ENCODE measurements at regions of chr5 and their contacts with region 1.

Region 1: DNA sequence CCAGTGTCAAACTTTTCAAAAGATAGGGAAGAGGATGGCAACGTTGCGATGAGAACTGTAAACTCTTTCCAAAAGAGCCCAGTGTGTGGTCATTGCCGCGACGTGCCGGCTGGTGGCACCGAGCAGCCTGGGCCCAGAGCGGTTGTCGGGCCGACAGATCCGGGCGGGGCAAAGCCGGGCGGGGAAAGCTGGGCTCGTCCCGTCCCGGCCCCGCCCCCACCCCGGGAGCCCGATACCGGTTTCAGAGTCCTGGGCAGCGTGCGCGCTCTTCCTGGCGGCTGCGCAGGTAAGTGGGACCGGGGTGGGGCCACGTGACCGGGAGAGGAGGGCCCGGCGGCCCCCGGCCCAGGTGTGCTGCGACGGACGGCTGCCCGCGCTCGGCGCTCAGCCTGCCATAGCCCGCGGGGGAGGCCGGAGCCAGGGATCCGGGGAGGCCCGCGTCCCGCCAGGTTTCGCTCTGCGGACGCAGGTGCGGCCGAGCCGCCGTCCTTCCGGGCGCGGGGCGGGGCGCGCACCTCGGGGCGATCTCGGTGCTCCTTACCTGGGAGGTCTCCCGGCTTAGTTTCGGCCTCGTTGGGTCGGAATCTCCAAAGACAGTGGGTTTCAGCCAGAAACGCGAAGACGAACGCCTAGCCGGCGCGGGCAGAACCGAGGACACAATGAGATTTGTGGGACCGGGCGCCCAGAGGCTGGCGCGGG is at the start of gene MARVELD2:
- DNase-seq: peak; percentile 96 to 98 (median 96)
- ATAC-seq: peak; percentile 93 to 97 (median 96)
- H3K4me3 ChIP-seq: peak within 1 kb of the TSS; percentile 38 to 66 (median 60)
- H3K27ac ChIP-seq: peak within 1 kb of the TSS; percentile 82 to 91 (median 88)
- H3K4me1 ChIP-seq: peaks cover 0 to 11% (median 4%) of the 10 kb centered on the region in 3 donors
- H3K27me3 ChIP-seq: no peaks in the 10 kb centered on the region
- CTCF ChIP-seq: peak; percentile 25 to 48 (median 34)
- total RNA-seq, gene MARVELD2: 15.5 to 34.7 (median 21.0) TPM

Region 2: GRCh38 chr5:68898951-68899471 is 516.0 kb before region 1 on chr5:
- intact Hi-C with region 1: no loop called
- DNase-seq: no peak
- ATAC-seq: peak in 2 of 4 donors; percentile 51 to 72
- H3K4me3 ChIP-seq: no peak overlapping the region
- H3K27ac ChIP-seq: no peak overlapping the region
- H3K4me1 ChIP-seq: no peaks in the 10 kb centered on the region
- H3K27me3 ChIP-seq: no peaks in the 10 kb centered on the region
- CTCF ChIP-seq: no peak

Region 3: DNA sequence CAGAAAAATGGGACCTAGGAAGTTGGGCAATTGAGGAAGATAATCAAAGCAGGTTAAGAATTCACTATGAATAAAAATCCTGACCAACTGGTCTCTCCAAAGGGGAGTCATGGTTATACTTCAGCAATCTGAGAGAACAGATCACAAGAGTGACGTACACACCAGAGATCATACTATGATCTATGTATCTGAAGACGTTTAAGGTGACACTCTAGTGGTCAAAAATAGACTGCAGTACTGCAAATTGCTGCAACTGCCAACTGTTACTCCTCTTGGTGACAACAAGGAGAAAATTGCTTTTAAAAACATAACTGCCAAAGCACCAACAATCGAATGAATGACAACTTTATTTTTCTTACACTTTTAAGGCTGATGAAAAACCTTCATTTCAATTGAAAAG is 50.6 kb before region 1 on chr5:
- intact Hi-C with region 1: no loop called
- DNase-seq: no peak
- ATAC-seq: no peak
- H3K4me3 ChIP-seq: no peak overlapping the region
- H3K27ac ChIP-seq: no peak overlapping the region
- H3K4me1 ChIP-seq: peaks cover 0 to 11% (median 6%) of the 10 kb centered on the region in 3 donors
- H3K27me3 ChIP-seq: no peaks in the 10 kb centered on the region
- CTCF ChIP-seq: peak in 2 of 4 donors; percentile 14 to 21

Region 4: DNA sequence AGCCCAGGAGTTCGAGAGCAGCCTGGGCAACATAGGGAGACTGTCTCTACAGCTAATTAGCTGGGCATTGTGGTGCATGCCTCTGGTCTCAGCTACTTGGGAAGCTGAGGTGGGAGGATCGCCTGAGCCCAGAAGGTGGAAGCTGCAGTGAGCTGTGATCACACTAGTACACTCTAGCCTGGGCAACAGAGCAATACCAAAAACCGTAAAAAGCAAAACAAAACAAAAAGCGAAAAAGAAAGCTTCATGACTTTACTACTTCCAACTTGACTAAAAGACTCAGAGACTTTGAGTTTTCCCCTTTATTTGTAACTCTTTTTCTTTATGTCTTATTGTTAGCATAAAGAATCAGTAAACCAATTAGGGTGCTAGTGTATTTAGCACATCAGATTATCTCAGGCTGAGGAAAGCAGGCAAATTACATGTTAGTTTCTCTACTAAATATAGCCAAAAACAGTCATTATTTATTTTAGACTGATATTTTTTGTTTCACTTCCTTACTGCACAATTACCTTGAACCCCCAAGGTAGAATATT is 40.1 kb before region 1 on chr5:
- intact Hi-C with region 1: no loop called
- DNase-seq: no peak
- ATAC-seq: no peak
- H3K4me3 ChIP-seq: no peak overlapping the region
- H3K27ac ChIP-seq: no peak overlapping the region
- H3K4me1 ChIP-seq: peaks cover 0 to 6% (median 5%) of the 10 kb centered on the region in 3 donors
- H3K27me3 ChIP-seq: no peaks in the 10 kb centered on the region
- CTCF ChIP-seq: no peak

Region 5: DNA sequence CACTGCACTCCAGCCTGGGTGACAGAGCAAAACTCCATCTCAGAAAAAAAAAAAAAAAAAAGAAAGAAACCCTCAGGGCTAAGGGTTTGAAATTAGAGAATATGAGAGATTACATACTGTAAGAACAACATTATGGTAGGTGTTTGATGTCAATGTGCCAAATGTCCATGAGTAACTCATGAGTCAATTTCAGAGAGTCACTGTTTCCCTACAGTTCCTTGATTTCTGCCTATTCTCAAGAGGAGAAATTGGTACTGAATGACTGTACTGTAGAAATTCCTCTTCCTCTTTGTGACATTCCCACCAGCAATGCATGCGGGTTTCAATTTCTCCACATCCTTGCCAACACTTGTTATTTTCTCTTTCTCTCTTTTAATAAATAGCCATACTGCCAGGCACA is 35.1 kb after region 1 on chr5:
- intact Hi-C with region 1: loop called in 1 of 3 experiments (anchors 5 kb)
- DNase-seq: no peak
- ATAC-seq: peak in 2 of 4 donors; percentile 7 to 31
- H3K4me3 ChIP-seq: no peak overlapping the region
- H3K27ac ChIP-seq: peak overlapping the region in 2 of 4 donors; percentile 90 to 96
- H3K4me1 ChIP-seq: peaks cover 8 to 35% (median 20%) of the 10 kb centered on the region in 3 donors
- H3K27me3 ChIP-seq: no peaks in the 10 kb centered on the region
- CTCF ChIP-seq: no peak